AG04450 (cell line): ENCODE measurements at regions of chr11 and their contacts with region 1.

Region 1: DNA sequence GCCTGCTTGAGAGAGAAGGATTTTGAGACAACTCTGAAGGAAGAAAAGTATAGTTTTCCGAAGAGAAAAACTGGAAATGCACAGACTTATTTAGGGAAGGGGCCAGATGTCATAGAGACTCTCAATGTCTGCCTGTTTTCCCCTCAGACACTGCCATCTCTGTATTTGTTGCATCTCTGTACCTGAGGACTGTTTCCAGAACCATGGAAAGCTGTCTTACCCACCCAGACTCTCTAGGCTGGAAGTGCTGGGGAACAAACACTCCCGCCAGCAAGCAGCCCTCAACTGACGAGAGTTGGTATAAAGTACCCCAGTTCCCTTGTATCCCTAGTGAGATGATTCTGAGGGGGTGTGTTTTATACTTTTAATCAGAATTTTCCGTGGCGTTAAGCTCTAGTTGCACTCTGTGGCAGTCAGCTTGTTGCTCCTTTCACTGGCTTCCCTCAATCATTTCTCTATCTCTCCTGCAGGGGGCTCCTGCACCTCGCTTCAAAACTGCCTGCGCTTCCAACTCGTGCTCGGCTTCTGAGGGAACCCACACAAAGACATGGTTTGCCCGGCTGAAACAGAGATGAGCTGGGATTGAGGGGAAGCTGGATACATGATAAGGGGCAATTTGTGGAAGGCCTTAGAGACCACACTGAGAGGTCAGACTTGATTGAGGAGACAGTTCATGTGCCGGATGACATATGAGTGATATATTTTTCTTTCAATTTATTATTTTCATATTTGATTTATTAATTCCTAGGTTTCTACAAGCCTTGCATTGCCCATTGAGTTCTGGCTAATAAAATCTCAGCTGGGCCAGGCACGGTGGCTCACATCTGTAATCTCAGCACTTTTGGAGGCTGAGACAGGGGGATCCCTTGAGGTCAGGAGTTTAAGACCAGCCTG is 36.9 kb upstream of the CLPB start:
- DNase-seq: peak; percentile 32
- H3K4me3 ChIP-seq: no peak overlapping the region
- H3K27ac ChIP-seq: no peak overlapping the region
- H3K27me3 ChIP-seq: peaks cover 28% of the 10 kb centered on the region
- CTCF ChIP-seq: peak; percentile 94

Region 2: DNA sequence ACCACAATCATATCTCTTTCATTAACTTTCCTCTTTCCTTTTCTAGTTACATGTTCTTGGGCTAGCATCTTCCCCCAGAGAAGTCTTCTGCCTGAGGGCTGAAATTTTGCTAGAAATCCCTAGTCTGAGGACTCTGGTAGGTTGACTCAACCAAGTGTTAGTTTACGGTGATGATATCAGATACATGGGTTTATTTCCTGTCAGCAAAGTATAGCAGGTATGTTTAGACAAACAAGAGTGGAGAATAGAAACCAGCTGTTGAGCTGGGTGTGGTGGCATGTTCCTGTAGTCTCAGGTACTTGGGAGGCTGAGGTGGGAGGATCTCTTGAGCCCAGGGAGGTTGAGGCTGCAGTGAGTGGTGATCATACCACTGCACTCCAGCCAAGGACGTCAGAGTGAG is 268.1 kb before region 1 on chr11:
- CTCF ChIA-PET with region 1: interaction called, 10 read pairs
- POLR2A ChIA-PET with region 1: no interaction called
- DNase-seq: no peak
- H3K4me3 ChIP-seq: no peak overlapping the region
- H3K27ac ChIP-seq: no peak overlapping the region
- H3K27me3 ChIP-seq: peaks cover 6% of the 10 kb centered on the region
- CTCF ChIP-seq: no peak

Region 3: GRCh38 chr11:72454791-72455190 is 16.5 kb before region 1 on chr11:
- CTCF ChIA-PET with region 1: interaction called, 23 read pairs
- POLR2A ChIA-PET with region 1: no interaction called
- DNase-seq: no peak
- H3K4me3 ChIP-seq: no peak overlapping the region
- H3K27ac ChIP-seq: no peak overlapping the region
- H3K27me3 ChIP-seq: peaks cover 28% of the 10 kb centered on the region
- CTCF ChIP-seq: peak; percentile 32

Region 4: GRCh38 chr11:72483412-72484186 is 12.3 kb after region 1 on chr11:
- CTCF ChIA-PET with region 1: interaction called, 16 read pairs
- POLR2A ChIA-PET with region 1: no interaction called
- DNase-seq: no peak
- H3K4me3 ChIP-seq: no peak overlapping the region
- H3K27ac ChIP-seq: no peak overlapping the region
- H3K27me3 ChIP-seq: peaks cover 25% of the 10 kb centered on the region
- CTCF ChIP-seq: no peak

Region 5: GRCh38 chr11:72556433-72556832 is 85.2 kb after region 1 on chr11:
- CTCF ChIA-PET with region 1: interaction called, 12 read pairs
- POLR2A ChIA-PET with region 1: no interaction called
- DNase-seq: no peak
- H3K4me3 ChIP-seq: no peak overlapping the region
- H3K27ac ChIP-seq: no peak overlapping the region
- H3K27me3 ChIP-seq: peaks cover 21% of the 10 kb centered on the region
- CTCF ChIP-seq: no peak

Region 6: DNA sequence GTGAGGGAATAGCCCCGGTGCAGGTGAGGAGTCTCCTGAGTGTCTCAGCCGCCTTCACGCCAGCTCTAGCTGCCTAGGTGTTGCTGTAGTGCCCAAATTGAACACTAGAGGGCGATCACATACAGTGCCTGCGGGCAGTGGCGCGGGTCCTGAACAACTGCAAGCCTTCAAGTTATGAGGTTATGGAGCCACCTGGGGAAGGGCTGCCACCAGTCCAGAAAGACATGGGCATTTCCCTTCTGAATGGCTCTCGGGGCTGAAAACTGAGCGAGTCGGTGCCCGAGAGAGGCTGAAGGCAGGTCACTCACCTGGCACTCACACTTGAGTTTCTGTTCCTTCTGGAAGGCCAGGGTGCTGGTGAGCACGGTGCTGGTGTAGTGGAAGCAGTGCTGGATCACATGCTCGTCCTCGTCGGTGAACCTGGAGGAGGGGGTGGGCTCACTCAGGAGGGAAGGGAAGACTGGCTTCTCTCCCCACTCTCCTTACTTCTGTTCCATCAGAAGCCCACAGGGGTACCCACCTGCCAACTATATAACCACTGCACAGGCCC is 114.6 kb after region 1 on chr11:
- CTCF ChIA-PET with region 1: interaction called, 15 read pairs
- POLR2A ChIA-PET with region 1: no interaction called
- DNase-seq: peak; percentile 10
- H3K4me3 ChIP-seq: no peak overlapping the region
- H3K27ac ChIP-seq: no peak overlapping the region
- H3K27me3 ChIP-seq: peaks cover 74% of the 10 kb centered on the region
- CTCF ChIP-seq: peak; percentile 84

Region 7: GRCh38 chr11:72642884-72643511 is 171.7 kb after region 1 on chr11:
- CTCF ChIA-PET with region 1: interaction called, 17 read pairs
- POLR2A ChIA-PET with region 1: no interaction called
- DNase-seq: no peak
- H3K4me3 ChIP-seq: peak overlapping the region; percentile 51; the same call in 1 of the 2 replicates
- H3K27ac ChIP-seq: no peak overlapping the region
- H3K27me3 ChIP-seq: peaks cover 44% of the 10 kb centered on the region
- CTCF ChIP-seq: peak; percentile 76

Region 8: DNA sequence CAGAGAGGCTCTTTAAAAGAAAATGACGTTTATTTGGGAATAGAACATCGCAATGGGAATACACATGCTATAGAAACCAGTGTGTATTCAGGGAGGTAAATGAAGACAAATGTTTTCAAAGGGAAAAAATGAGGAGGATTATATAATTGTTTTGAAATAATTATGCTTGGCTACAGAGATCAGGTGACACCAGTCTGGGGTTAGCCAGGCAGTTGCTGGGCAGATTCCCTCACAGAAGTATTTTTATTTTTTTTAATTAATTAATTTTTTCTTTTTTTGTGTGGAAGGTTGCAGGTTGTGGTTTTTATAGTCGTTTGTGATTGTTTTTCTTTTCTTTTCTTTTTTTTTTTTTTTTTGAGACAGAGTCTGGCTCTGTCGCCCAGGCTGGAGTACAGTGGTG is 328.2 kb after region 1 on chr11:
- CTCF ChIA-PET with region 1: no interaction called
- POLR2A ChIA-PET with region 1: no interaction called
- DNase-seq: no peak
- H3K4me3 ChIP-seq: no peak overlapping the region
- H3K27ac ChIP-seq: no peak overlapping the region
- H3K27me3 ChIP-seq: no peaks in the 10 kb centered on the region
- CTCF ChIP-seq: no peak